Activated naive CD4-positive, alpha-beta T cell treated with anti-CD3 and anti-CD28 coated beads, Interleukin-2, amount 10 ng/mL, durations not matched to agents 7 days and 5 days (primary cell): ENCODE measurements at regions of chr12 and their contacts with region 1.

Region 1: GRCh38 chr12:6335451-6336078 is 6.3 kb downstream of the TNFRSF1A start:
- DNase-seq: peak; percentile 91
- H3K4me3 Mint-ChIP-seq: no peak overlapping the region
- H3K27ac Mint-ChIP-seq: no peak overlapping the region
- H3K4me1 Mint-ChIP-seq: peaks cover 4% of the 10 kb centered on the region
- H3K27me3 Mint-ChIP-seq: no peaks in the 10 kb centered on the region

Region 2: GRCh38 chr12:6167327-6168259 is 168.0 kb before region 1 on chr12:
- CTCF ChIA-PET with region 1: no interaction called
- DNase-seq: peak; percentile 46
- H3K4me3 Mint-ChIP-seq: no peak overlapping the region
- H3K27ac Mint-ChIP-seq: no peak overlapping the region
- H3K4me1 Mint-ChIP-seq: peaks cover 27% of the 10 kb centered on the region
- H3K27me3 Mint-ChIP-seq: peaks cover 22% of the 10 kb centered on the region

Region 3: GRCh38 chr12:6323340-6323994 is 12.1 kb before region 1 on chr12:
- CTCF ChIA-PET with region 1: interaction called, 33 read pairs
- DNase-seq: peak; percentile 49
- H3K4me3 Mint-ChIP-seq: peak overlapping the region; percentile 1
- H3K27ac Mint-ChIP-seq: peak overlapping the region; percentile 80
- H3K4me1 Mint-ChIP-seq: peaks cover 41% of the 10 kb centered on the region
- H3K27me3 Mint-ChIP-seq: peaks cover 10% of the 10 kb centered on the region

Region 4: DNA sequence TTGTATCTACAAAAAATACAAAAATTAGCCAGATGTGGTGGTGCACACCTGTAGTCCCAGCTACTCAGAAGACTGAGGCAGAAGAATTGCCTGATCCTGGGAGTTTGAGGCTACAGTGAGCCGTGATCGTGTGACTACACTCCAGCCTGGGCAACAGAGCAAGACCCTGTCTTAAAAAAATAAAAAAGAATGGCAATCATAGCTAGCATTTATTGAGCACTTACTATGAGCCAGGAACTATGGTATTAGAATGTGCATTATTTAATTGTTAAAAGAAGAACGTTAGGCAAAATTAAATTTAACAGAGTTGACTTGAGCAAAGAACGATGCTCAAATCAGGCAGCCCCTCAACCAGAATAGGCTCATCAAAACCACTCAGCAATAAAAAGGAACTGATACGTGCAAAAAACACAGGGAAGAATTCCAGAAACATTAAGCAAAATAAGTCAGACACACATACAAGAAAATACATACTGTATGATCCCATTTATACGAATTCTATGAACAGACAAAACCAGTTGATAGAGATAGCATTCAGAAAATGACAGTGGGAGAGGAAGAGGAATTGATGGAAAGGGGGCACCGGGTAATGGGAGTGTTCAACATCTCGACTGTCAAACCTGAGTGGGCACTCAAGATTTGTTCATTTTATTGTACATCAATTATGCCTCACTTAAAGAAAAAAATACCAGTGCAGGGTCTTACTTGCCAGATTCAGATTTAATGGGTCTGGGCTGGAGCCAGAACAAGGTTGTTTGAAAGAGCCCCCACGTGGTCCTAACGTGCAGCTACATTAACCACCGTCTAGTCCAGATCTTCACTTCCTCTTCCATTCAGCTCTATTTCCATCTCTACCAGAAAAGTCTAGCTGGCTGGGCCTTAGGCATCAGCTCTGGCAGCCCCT is 31.8 kb after region 1 on chr12:
- CTCF ChIA-PET with region 1: interaction called, 91 read pairs
- DNase-seq: peak; percentile 56
- H3K4me3 Mint-ChIP-seq: no peak overlapping the region
- H3K27ac Mint-ChIP-seq: peak overlapping the region; percentile 58
- H3K4me1 Mint-ChIP-seq: peaks cover 58% of the 10 kb centered on the region
- H3K27me3 Mint-ChIP-seq: peaks cover 13% of the 10 kb centered on the region

Region 5: GRCh38 chr12:6372403-6373003 is 36.9 kb after region 1 on chr12:
- CTCF ChIA-PET with region 1: interaction called, 91 read pairs
- DNase-seq: no peak
- H3K4me3 Mint-ChIP-seq: no peak overlapping the region
- H3K27ac Mint-ChIP-seq: peak overlapping the region; percentile 81
- H3K4me1 Mint-ChIP-seq: peaks cover 66% of the 10 kb centered on the region
- H3K27me3 Mint-ChIP-seq: peaks cover 35% of the 10 kb centered on the region

Region 6: GRCh38 chr12:6461401-6462233 is 126.1 kb after region 1 on chr12:
- CTCF ChIA-PET with region 1: interaction called, 33 read pairs
- DNase-seq: peak; percentile 92
- H3K4me3 Mint-ChIP-seq: peak overlapping the region; percentile 75
- H3K27ac Mint-ChIP-seq: peak overlapping the region; percentile 100
- H3K4me1 Mint-ChIP-seq: peaks cover 89% of the 10 kb centered on the region
- H3K27me3 Mint-ChIP-seq: no peaks in the 10 kb centered on the region